ENCODE measurements at regions of chr11 and their contacts with region 1.

Region 1: DNA sequence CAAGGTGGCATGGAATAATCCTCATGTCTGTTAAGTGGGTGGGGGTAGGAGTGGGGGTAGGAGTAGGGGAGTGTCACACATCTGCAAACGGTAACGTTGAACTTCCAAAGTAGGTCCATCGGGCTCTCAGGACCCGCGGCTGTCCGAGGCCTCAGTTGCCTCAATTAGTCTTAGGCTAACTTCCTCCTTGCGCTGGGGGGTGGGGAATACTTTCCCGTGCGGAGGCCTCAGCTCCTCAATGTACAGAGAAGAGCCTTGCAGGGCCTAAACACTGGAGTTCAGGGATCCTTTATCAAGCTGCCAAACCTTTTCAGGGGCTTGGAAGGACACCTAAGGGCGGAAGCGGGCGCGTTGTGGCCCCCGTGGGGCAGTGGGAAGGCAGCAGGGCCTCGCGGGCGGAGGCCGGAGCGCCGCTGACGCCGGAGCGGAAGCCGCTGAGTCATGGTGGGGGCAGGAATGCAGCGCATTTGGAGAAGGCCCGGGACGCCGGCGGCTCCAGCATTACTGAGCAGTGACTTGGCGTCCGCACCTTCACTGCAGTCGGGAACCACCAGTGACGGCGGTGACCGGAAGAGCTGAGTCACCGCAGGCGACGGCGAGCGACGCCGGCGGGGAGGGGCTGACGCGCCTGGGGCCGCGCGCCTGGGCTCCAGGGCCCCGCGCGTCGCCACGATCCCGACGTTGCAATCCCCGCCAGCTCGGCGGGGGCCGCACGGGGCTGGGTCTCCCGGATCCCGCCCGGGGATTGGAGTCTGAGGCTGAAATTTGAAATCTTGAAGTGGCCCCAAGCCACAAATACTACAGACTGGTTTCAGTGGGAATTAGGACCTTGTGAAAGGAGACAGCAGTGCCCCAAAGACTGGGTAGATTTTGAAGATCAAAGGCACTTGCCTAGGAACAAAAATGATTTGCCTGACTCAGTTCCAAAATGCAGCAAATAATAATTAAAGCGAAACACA is 20.2 kb upstream of the IPO7 start:
- DNase-seq: peak; percentile 98
- H3K4me3 Mint-ChIP-seq: peak overlapping the region; percentile 56
- H3K27ac Mint-ChIP-seq: peak overlapping the region; percentile 99
- H3K4me1 Mint-ChIP-seq: peaks cover 31% of the 10 kb centered on the region
- H3K27me3 Mint-ChIP-seq: no peaks in the 10 kb centered on the region
- CTCF ChIP-seq: no peak

Region 2: GRCh38 chr11:9158898-9159391 is 205.3 kb before region 1 on chr11:
- CTCF ChIA-PET with region 1: no interaction called
- intact Hi-C with region 1: no loop called
- DNase-seq: no peak
- H3K4me3 Mint-ChIP-seq: no peak overlapping the region
- H3K27ac Mint-ChIP-seq: no peak overlapping the region
- H3K4me1 Mint-ChIP-seq: no peaks in the 10 kb centered on the region
- H3K27me3 Mint-ChIP-seq: no peaks in the 10 kb centered on the region
- CTCF ChIP-seq: no peak

Region 3: GRCh38 chr11:9250139-9250582 is 114.1 kb before region 1 on chr11:
- CTCF ChIA-PET with region 1: no interaction called
- intact Hi-C with region 1: no loop called
- DNase-seq: no peak
- H3K4me3 Mint-ChIP-seq: no peak overlapping the region
- H3K27ac Mint-ChIP-seq: no peak overlapping the region
- H3K4me1 Mint-ChIP-seq: no peaks in the 10 kb centered on the region
- H3K27me3 Mint-ChIP-seq: no peaks in the 10 kb centered on the region
- CTCF ChIP-seq: no peak

Region 4: DNA sequence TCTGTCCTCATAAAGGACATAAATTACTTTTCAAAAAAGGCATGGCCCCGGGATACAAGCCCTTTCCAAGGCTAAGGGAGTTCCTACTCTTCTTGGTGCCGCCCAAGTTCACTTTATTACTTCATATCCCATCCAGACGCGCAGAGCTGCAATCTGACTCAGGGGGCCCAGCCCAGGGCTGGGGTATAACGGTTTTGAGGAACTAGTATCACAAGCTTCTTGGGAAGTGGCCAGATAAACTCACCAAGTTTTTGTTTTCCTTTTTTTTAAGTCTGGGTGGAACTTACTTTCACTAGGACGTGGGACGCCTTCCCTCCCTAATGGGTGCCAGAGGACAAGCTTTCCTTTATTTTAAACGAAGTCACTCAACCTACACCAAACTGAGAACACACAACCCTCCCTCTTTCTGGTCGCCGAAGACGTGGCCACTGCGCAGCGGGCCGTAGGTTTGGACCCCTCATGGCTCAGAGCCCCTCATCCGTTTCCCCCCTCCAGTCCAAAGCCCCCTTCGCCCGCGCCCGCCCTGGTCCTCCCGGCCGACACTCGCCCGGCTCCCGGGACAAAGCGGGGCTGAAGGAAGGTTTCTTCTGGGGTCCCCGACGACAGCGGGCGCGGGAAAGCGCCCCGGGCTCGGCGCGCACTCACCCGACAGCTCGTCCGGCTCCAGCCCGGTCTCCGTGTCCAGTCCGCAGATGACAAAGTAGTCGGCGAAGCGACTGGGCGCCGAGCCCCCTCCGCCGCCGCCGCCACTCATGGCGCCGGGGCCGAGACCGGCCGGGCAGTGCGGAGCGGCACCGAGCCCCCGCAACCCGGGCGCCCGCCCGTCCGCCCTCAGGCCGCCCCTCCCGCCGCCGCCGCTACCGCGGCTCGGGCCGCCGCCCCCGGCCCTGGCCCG is 99.7 kb before region 1 on chr11:
- CTCF ChIA-PET with region 1: no interaction called
- intact Hi-C with region 1: no loop called
- DNase-seq: peak; percentile 16
- H3K4me3 Mint-ChIP-seq: peak overlapping the region; percentile 88
- H3K27ac Mint-ChIP-seq: peak overlapping the region; percentile 85
- H3K4me1 Mint-ChIP-seq: peaks cover 21% of the 10 kb centered on the region
- H3K27me3 Mint-ChIP-seq: no peaks in the 10 kb centered on the region
- CTCF ChIP-seq: no peak

Region 5: GRCh38 chr11:9314291-9315036 is 49.8 kb before region 1 on chr11 and contains the start of gene TMEM41B:
- CTCF ChIA-PET with region 1: no interaction called
- intact Hi-C with region 1: loop called (anchors 2 kb)
- DNase-seq: peak; percentile 99
- H3K4me3 Mint-ChIP-seq: peak within 1 kb of the TSS; percentile 100
- H3K27ac Mint-ChIP-seq: peak within 1 kb of the TSS; percentile 96
- H3K4me1 Mint-ChIP-seq: peaks cover 34% of the 10 kb centered on the region
- H3K27me3 Mint-ChIP-seq: no peaks in the 10 kb centered on the region
- CTCF ChIP-seq: no peak
- total RNA-seq, gene TMEM41B: 71.8 and 72.0 TPM in 2 replicates

Region 6: GRCh38 chr11:9384535-9385303 is 20.5 kb after region 1 on chr11 and contains the start of gene IPO7:
- CTCF ChIA-PET with region 1: interaction called, 15 read pairs
- intact Hi-C with region 1: loop called (anchors 2 kb)
- DNase-seq: peak; percentile 89
- H3K4me3 Mint-ChIP-seq: peak within 1 kb of the TSS; percentile 89
- H3K27ac Mint-ChIP-seq: peak within 1 kb of the TSS; percentile 96
- H3K4me1 Mint-ChIP-seq: peaks cover 17% of the 10 kb centered on the region
- H3K27me3 Mint-ChIP-seq: no peaks in the 10 kb centered on the region
- CTCF ChIP-seq: peak; percentile 31
- total RNA-seq, gene IPO7: 139 and 170 TPM in 2 replicates